WTC11 (cell line): ENCODE measurements at regions of chr6 and their contacts with region 1.

Region 1: GRCh38 chr6:34223956-34224940 is 12.4 kb upstream of the HMGA1 start:
- DNase-seq: peak; percentile 92
- ATAC-seq: peak; percentile 85
- H3K4me3 Mint-ChIP-seq: peak overlapping the region; percentile 77
- H3K27ac Mint-ChIP-seq: peak overlapping the region; percentile 97
- H3K4me1 Mint-ChIP-seq: peaks cover 47% of the 10 kb centered on the region
- H3K27me3 Mint-ChIP-seq: no peaks in the 10 kb centered on the region; the same call in 1 of the 2 replicates
- CTCF ChIP-seq: no peak

Region 2: DNA sequence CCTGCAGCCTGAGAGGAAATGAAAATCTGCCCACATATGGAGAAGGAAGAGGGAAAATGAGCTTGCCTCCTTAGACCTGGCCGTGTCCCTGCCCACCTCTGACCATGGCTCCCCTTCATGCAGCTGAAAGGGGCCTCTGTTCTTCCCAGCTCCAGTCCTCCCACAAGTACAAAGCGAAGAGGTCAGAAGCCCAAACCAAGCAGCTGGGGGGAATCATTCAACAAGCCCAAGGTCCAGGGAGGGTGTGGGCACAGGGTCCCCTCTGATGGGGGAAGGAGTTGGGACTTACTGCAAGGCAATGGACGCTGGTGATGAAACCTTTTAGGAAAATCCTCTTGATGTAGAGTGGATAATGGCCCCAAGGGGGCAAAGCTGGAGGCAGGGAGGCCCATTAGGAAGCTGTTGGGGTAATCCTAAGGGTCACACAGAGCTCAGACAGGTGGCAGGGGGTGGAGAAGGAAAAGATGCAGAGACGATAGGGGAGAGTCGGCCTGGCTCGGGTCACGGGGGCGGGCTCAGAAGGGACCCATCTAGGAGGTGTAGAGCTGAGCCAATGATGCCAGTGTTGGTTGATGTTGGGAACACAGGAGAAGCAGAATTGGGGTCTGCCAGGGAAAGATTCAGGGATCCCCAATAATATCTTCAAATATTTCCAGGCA is 62.3 kb before region 1 on chr6:
- CTCF ChIA-PET with region 1: interaction called, 10 read pairs
- POLR2A ChIA-PET with region 1: no interaction called
- DNase-seq: peak; percentile 7
- ATAC-seq: no peak
- H3K4me3 Mint-ChIP-seq: no peak overlapping the region
- H3K27ac Mint-ChIP-seq: no peak overlapping the region
- H3K4me1 Mint-ChIP-seq: no peaks in the 10 kb centered on the region
- H3K27me3 Mint-ChIP-seq: peaks cover 15% of the 10 kb centered on the region; the same call in 1 of the 2 replicates
- CTCF ChIP-seq: no peak

Region 3: DNA sequence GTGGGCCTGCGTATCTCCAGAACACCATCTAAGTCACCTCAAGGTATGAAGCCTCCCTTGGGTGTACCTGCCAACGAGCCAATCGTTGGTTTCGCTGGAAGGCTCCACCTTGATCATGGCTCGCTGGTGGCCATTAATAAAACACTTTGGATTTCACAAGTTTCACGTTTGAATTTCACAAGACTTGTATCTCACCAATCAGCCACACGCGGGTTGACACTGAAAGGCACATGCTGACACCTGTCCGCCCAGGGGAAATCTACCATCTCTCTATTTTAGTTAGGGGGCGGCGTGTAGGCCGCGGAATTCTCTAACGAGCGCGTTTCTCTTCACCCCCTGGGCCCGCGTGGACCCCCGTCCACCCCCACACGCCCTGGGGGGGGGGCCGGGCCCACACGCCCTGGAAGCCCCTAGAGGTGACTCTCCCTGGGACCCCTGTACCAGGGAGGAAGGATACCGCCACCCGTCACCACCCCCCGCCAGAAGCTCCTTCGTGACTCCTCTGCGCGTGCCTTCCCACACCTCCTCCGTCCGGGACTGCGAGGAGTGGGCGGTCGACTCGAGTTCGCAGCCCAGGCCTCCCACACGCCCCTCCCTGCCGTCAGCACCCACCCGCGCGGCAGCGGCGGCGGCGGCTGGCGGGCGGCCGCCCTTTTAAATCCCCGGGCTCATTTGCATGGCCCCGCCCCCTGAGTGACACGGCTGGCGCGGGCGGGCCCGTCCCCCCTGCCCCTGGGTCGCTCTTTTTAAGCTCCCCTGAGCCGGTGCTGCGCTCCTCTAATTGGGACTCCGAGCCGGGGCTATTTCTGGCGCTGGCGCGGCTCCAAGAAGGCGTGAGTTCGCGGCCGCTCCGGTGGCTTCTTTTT is 12.1 kb after region 1 on chr6 and contains the start of gene HMGA1:
- CTCF ChIA-PET with region 1: interaction called, 5 read pairs
- POLR2A ChIA-PET with region 1: interaction called, 41 read pairs
- DNase-seq: peak; percentile 88
- ATAC-seq: peak; percentile 34
- H3K4me3 Mint-ChIP-seq: peak within 1 kb of the TSS; percentile 93
- H3K27ac Mint-ChIP-seq: peak within 1 kb of the TSS; percentile 100
- H3K4me1 Mint-ChIP-seq: peaks cover 52% of the 10 kb centered on the region
- H3K27me3 Mint-ChIP-seq: no peaks in the 10 kb centered on the region
- CTCF ChIP-seq: no peak
- total RNA-seq, gene HMGA1: 2,446 to 2,677 TPM (median 2,610 TPM) in 3 replicates